Dorsolateral prefrontal cortex (tissue), 120 donors: ENCODE measurements at regions of chr15 and their contacts with region 1.

Region 1: GRCh38 chr15:33700695-33701304 is 267.5 kb upstream of the CHRM5 start:
- DNase-seq: peak; percentile 45 to 88 (median 68)
- H3K4me3 ChIP-seq: no peak overlapping the region
- H3K27ac ChIP-seq: no peak overlapping the region
- H3K27me3 ChIP-seq: peaks cover 0 to 3% (median 0%) of the 10 kb centered on the region in 45 donors
- CTCF ChIP-seq: peak; percentile 52 to 97 (median 92)

Region 2: DNA sequence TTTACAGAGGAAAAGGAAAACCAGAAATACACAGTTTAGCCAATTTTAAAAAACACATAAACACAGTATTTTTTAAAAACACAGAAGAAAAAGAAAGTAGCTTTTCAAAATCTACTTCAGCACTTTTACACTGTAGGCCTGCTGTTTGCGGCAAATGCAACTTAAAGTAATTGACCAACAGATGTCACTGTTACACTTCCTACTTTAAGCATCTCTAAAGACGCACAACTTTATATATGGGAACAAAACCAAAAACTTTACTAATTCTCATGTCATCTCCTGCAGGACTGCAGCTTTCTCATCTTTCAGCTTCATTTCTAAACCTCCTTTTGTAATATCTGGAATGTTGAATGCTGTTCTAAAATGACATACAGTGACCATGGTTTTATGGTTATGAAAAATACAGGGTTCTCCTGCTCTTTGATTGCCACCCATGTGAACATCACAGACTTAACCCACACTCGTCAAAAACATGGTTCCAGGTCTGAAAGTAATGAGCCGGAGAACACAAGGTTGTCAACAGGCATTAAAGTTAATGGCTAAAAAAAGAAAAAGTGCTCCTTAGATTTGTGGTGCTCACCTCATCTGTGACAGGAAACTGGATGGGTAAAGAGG is 614.2 kb before region 1 on chr15:
- intact Hi-C with region 1: loop called (anchors 5 to 10 kb)
- DNase-seq: no peak
- H3K4me3 ChIP-seq: no peak overlapping the region
- H3K27ac ChIP-seq: no peak overlapping the region
- H3K27me3 ChIP-seq: no peaks in the 10 kb centered on the region
- CTCF ChIP-seq: peak; percentile 23 to 81 (median 65)

Region 3: GRCh38 chr15:33242669-33243191 is 458.1 kb before region 1 on chr15:
- intact Hi-C with region 1: loop called in 1 of 2 experiments (anchors 10 kb)
- DNase-seq: no peak
- H3K4me3 ChIP-seq: no peak overlapping the region
- H3K27ac ChIP-seq: no peak overlapping the region
- H3K27me3 ChIP-seq: peaks cover 0 to 3% (median 0%) of the 10 kb centered on the region in 45 donors
- CTCF ChIP-seq: peak in 52 of 56 donors; percentile 1 to 70 (median 44)

Region 4: DNA sequence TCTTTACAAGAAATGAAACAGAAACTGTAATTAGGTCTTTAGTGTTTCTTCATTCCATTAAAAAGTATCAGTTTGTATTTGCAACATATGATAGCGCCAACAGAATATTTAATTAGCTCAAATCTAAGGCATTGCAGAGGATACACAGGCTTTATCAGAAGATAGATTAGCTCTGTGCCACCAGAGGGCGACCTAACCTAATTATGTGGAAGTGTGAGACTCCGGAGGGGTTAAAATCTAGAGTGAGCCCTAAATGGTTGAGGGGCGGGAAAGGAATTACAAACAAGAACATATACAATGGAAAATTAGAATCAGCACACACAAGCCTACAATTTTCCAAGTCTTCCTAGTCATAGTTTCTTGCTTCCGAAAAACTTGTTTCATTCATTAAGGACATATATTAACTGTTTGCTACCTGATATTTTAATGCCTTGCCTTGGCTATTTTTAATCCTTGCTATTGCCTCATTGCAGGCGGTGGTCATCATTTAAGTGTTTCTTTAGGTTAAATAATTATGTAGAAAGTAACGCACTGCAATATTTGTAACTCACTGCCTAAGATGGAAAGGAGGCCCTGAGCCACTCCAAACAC is 408.0 kb before region 1 on chr15:
- intact Hi-C with region 1: loop called (anchors 2 to 5 kb)
- DNase-seq: peak in 6 of 10 donors; percentile 14 to 78 (median 55)
- H3K4me3 ChIP-seq: peak overlapping the region in 17 of 59 donors; percentile 0 to 43 (median 18)
- H3K27ac ChIP-seq: no peak overlapping the region
- H3K27me3 ChIP-seq: no peaks in the 10 kb centered on the region
- CTCF ChIP-seq: peak; percentile 50 to 92 (median 80)

Region 5: GRCh38 chr15:33309602-33310276 is 391.1 kb before region 1 on chr15:
- intact Hi-C with region 1: loop called (anchors 5 kb)
- DNase-seq: peak in 7 of 10 donors; percentile 39 to 71 (median 65)
- H3K4me3 ChIP-seq: peak overlapping the region in 29 of 59 donors; percentile 2 to 72 (median 25)
- H3K27ac ChIP-seq: peak overlapping the region in 3 of 59 donors; percentile 4 to 37 (median 8)
- H3K27me3 ChIP-seq: peaks cover 0 to 25% (median 5%) of the 10 kb centered on the region in 45 donors
- CTCF ChIP-seq: peak in 50 of 56 donors; percentile 18 to 64 (median 44)

Region 6: DNA sequence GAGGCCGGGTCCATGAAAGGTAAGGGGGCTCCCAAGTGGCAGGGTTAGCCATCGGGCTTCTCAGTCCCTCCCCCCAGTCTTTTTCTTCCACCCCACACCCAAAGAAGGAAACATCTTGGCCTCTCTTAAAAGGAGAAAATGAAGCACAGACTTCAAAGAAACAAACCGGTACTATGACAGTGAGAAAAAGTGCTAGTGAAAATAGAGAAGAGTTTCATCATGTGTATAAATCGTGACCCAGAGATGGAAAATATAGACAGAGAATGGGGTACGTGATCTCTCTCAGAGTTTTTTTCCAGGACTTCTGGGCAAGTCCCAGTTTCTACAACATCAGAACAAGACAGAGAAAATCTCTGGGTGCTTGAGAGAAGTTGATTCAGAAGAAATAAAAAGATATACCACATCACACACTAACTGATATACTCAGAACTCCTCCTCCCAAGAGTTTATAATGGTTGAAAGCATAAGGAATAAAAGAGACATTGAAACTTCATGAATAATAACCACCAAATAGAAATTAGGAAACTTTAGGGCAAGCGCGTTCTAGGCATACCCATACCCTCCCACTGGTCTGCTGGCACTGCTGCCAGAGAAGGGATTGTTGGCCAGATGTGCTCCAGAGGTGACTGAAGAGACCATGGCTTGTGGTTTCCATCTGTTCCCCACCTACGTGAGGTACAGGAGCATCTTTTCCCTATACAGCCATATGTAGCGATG is 51.4 kb before region 1 on chr15:
- intact Hi-C with region 1: loop called in 1 of 2 experiments (anchors 5 kb)
- DNase-seq: no peak
- H3K4me3 ChIP-seq: no peak overlapping the region
- H3K27ac ChIP-seq: no peak overlapping the region
- H3K27me3 ChIP-seq: peaks cover 0 to 12% (median 0%) of the 10 kb centered on the region in 45 donors
- CTCF ChIP-seq: no peak